ENCODE measurements at regions of chr17 and their contacts with region 1.

Region 1: GRCh38 chr17:72850410-72851118 is 241.9 kb downstream of the SLC39A11 start:
- DNase-seq: no peak
- H3K4me3 ChIP-seq: no peak overlapping the region
- H3K27ac ChIP-seq: no peak overlapping the region
- H3K4me1 ChIP-seq: no peaks in the 10 kb centered on the region
- H3K27me3 ChIP-seq: no peaks in the 10 kb centered on the region
- CTCF ChIP-seq: no peak

Region 2: DNA sequence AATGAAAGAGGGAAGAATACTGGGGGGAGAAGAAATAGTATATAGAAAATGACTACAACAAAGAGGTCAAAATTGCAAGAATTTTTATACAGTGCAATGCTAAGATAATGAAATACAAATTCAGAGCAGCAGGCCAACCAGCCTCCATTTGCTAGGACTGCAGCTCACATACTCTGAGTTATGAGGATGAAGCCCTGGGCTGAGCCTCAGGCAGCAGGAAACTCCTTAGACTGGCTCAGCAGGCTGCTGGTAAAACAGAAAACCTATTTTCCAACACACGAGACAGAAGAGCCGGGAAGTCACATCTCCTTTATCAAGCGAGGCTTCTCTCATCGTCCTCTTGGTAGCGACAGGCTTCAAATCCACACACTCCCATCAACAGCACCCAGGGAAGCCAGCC is 54.6 kb before region 1 on chr17:
- intact Hi-C with region 1: no loop called
- DNase-seq: no peak
- H3K4me3 ChIP-seq: no peak overlapping the region
- H3K27ac ChIP-seq: no peak overlapping the region
- H3K4me1 ChIP-seq: no peaks in the 10 kb centered on the region
- H3K27me3 ChIP-seq: no peaks in the 10 kb centered on the region
- CTCF ChIP-seq: no peak

Region 3: DNA sequence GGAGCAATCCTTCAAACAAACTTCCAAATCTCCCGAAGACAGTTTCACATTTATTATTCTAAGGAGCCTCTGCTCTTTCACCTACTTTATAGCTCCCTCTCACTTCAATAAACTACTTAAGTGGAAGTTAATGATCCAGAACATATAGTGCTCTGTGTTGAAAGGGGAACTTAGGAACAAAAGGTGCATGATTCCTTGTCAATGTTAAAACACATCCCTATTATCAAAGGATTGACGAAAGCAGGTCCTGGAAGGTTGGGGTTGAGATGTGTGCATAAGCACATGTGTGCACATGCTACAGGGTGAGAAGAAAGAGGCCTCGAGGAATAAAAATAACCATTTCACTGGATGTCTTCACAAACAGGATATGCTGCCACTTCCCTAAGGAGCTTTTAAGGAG is 71.7 kb after region 1 on chr17:
- intact Hi-C with region 1: loop called (anchors 10 kb)
- DNase-seq: no peak
- H3K4me3 ChIP-seq: no peak overlapping the region
- H3K27ac ChIP-seq: no peak overlapping the region
- H3K4me1 ChIP-seq: no peaks in the 10 kb centered on the region
- H3K27me3 ChIP-seq: no peaks in the 10 kb centered on the region
- CTCF ChIP-seq: no peak